GM23248 (cell line): ENCODE measurements at regions of chr5 and their contacts with region 1.

Region 1: DNA sequence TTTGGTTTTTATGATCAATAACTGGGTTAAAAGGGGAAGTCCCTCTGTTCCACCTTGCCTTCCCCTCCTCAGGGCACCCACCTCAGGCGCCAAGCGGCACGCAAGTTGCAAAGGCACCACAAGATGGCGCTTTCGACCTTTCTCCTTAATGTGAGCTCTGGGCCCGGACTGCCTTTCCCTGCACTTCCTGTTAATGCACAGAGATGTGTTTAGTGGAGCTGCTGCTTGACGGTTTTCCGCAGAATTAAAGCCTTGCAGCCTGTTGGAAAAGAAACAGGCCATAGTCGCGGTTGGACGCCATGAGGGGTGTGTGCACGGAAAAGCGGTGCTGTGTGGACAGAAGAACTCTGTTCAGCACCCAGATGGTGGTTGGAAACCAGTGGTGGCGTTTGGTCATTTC is 17.9 kb downstream of the CXCL14 start:
- DNase-seq: peak; percentile 88
- H3K4me3 ChIP-seq: no peak overlapping the region
- H3K27ac ChIP-seq: no peak overlapping the region
- H3K4me1 ChIP-seq: 0 out of 2 replicates have a peak, but pooled peaks cover 5% of the 10 kb centered on the region
- H3K27me3 ChIP-seq: peaks cover 38% of the 10 kb centered on the region

Region 2: DNA sequence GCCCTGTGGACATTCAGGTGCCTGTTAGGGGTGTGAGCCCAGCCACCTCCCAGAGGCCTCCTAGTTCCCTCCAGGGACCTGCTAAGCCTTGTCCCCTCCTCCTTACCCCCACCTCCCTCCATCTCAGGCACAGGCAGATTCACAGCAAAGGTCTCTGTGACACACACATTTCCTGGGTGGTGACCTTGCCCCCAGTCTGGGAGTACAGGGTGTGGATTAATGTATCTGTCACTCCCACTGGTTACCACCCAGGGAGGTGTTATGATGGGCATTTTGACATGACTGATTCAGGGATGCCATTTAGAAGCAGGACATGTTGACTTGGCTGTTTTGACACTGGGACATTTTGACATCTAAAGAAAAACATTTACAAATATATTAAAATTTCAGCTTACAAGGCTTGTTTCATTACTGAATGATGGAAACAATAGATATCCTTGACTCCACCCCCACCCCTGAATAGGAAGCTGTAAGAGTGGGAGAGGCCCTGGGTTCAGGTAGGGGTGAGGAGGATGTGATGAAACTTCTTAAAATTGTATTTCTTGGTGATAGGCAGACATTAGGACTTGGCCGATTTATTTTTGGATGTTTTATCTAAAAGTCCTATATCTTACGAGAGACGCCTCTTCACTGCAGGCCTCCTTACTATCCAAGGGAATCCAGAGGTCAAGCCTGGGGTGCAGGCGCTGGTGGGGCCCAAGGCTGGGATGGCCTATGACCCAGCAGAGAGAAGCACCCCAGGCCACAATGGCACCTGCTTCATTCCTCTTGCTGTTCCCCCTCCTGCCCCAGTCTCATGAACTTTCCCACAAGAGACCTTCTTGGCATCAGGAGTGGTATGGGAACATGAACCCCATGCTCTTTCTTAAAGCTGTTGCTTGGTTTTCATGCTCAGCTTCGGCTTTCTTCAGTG is 263.7 kb before region 1 on chr5:
- in situ Hi-C with region 1: no loop called
- DNase-seq: no peak
- H3K4me3 ChIP-seq: no peak overlapping the region
- H3K27ac ChIP-seq: no peak overlapping the region
- H3K4me1 ChIP-seq: no peaks in the 10 kb centered on the region
- H3K27me3 ChIP-seq: 0 out of 2 replicates have a peak, but pooled peaks cover 6% of the 10 kb centered on the region

Region 3: GRCh38 chr5:135829681-135830383 is 269.0 kb after region 1 on chr5:
- in situ Hi-C with region 1: loop called (anchors 5 kb)
- DNase-seq: peak; percentile 86
- H3K4me3 ChIP-seq: no peak overlapping the region
- H3K27ac ChIP-seq: no peak overlapping the region
- H3K4me1 ChIP-seq: no peaks in the 10 kb centered on the region
- H3K27me3 ChIP-seq: peaks cover 39% of the 10 kb centered on the region

Region 4: GRCh38 chr5:136212252-136212721 is 651.4 kb after region 1 on chr5:
- in situ Hi-C with region 1: loop called (anchors 25 kb)
- DNase-seq: peak; percentile 60
- H3K4me3 ChIP-seq: no peak overlapping the region
- H3K27ac ChIP-seq: no peak overlapping the region
- H3K4me1 ChIP-seq: no peaks in the 10 kb centered on the region
- H3K27me3 ChIP-seq: peaks cover 7% of the 10 kb centered on the region; the same call in 1 of the 2 replicates